ENCODE measurements at regions of chr11 and their contacts with region 1.

Region 1: DNA sequence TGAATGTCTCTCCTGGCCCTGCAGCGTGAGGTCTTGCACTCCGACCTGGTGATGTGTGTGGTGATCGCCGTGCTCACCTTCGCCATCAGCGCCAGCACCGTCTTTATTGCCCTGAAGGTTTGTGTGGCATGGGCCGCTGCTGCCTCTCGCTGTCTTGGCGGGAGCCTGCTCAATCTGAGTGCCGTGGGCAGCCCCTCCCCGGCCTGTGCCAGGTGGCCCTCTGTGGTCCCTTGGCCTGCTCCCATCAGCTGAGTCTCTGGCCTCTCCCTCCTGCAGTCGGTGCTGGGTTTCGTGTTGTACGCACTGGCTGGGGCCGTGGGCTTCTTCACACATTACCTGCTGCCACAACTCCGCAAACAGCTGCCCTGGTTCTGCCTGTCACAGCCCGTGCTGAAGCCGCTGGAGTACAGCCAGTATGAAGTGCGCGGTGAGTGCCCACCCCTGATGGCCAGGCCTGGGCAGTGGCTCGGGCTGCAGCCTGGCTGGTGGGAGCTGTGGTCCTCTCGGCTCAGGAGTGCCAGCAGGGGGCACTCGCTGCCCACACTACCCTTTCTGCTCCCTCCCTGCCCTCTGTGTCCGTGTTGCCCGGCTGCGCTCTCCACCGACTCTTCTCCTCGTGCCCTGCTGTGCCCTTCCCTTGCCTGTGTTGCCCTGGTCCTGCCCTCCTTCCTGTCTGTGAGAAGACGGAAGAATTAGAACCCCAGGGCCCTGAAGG is 10.2 kb downstream of the PCNX3 start:
- DNase-seq: peak in 2 of 3 donors; percentile 73 to 81
- H3K4me3 ChIP-seq: no peak overlapping the region
- H3K27ac ChIP-seq: no peak overlapping the region
- H3K4me1 ChIP-seq: peaks cover 0 to 5% (median 2%) of the 10 kb centered on the region in 4 experiments
- H3K27me3 ChIP-seq: no peaks in the 10 kb centered on the region

Region 2: GRCh38 chr11:65506770-65507505 is 118.8 kb before region 1 on chr11:
- CTCF ChIA-PET with region 1: no interaction called
- POLR2A ChIA-PET with region 1: no interaction called
- DNase-seq: peak; percentile 85 to 96 (median 96)
- H3K4me3 ChIP-seq: peak overlapping the region in 2 of 7 experiments; percentile 28 to 100
- H3K27ac ChIP-seq: peak overlapping the region in 1 of 2 experiments; percentile 100
- H3K4me1 ChIP-seq: peaks cover 18 to 46% (median 39%) of the 10 kb centered on the region in 4 experiments
- H3K27me3 ChIP-seq: no peaks in the 10 kb centered on the region

Region 3: DNA sequence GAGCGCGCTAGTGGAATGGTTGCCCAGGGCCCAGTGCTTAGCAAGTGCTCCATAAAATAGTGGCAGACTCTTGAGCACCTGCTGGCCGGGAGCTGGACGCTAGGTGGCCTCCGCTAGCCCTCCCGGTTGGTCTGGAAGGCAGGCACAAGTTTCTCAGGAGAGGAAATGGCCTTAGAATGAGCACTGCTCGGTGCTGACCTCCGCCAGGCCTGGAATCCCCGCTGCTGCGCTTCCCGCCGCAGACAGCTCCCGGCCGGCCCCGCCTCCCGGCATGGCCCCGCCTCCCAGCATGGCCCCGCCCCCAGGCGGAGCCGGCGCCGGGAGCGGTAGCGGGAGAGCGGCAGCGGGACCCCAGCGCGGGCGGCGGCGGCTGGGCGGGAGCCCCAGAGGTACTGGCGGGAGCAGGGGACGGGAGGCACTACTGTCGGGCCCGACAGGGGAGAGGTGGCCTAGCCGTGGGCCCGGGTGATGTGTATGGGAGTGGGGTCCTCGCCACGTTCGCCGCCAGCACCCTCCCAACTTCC is 12.1 kb after region 1 on chr11 and contains the start of gene SIPA1:
- CTCF ChIA-PET with region 1: interaction called, 56 read pairs
- POLR2A ChIA-PET with region 1: interaction called, 7 read pairs
- DNase-seq: peak in 2 of 3 donors; percentile 63 to 67
- H3K4me3 ChIP-seq: peak within 1 kb of the TSS; percentile 60 to 84 (median 79)
- H3K27ac ChIP-seq: peak within 1 kb of the TSS; percentile 33 to 84
- H3K4me1 ChIP-seq: peaks cover 5 to 82% (median 70%) of the 10 kb centered on the region in 4 experiments
- H3K27me3 ChIP-seq: no peaks in the 10 kb centered on the region

Region 4: GRCh38 chr11:65652511-65653231 is 26.9 kb after region 1 on chr11:
- CTCF ChIA-PET with region 1: interaction called, 39 read pairs
- POLR2A ChIA-PET with region 1: interaction called, 13 read pairs
- DNase-seq: peak; percentile 96 to 98 (median 97)
- H3K4me3 ChIP-seq: peak overlapping the region; percentile 20 to 78 (median 66)
- H3K27ac ChIP-seq: peak overlapping the region; percentile 93 to 94
- H3K4me1 ChIP-seq: peaks cover 13 to 42% (median 33%) of the 10 kb centered on the region in 4 experiments
- H3K27me3 ChIP-seq: no peaks in the 10 kb centered on the region

Region 5: DNA sequence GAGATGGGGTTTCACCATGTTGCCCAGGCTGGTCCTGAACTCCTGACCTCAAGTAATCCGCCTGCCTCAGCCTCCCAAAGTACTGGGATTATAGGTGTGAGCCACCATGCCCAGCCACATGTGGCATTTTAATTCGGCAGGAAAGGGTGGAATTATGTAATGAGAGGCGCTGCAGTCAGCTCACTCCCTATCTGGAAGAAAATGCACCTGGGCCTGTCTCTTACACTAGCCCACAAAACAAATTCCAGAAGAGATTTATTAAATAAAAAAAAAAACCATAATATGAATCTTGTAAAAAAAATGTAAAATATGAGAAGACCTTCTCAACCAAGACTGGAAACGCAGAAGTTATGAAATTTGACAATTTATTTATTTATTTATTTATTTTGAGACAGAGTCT is 78.1 kb after region 1 on chr11:
- CTCF ChIA-PET with region 1: interaction called, 36 read pairs
- POLR2A ChIA-PET with region 1: no interaction called
- DNase-seq: no peak
- H3K4me3 ChIP-seq: no peak overlapping the region
- H3K27ac ChIP-seq: no peak overlapping the region
- H3K4me1 ChIP-seq: peaks cover 0 to 3% (median 1%) of the 10 kb centered on the region in 4 experiments
- H3K27me3 ChIP-seq: no peaks in the 10 kb centered on the region

Region 6: DNA sequence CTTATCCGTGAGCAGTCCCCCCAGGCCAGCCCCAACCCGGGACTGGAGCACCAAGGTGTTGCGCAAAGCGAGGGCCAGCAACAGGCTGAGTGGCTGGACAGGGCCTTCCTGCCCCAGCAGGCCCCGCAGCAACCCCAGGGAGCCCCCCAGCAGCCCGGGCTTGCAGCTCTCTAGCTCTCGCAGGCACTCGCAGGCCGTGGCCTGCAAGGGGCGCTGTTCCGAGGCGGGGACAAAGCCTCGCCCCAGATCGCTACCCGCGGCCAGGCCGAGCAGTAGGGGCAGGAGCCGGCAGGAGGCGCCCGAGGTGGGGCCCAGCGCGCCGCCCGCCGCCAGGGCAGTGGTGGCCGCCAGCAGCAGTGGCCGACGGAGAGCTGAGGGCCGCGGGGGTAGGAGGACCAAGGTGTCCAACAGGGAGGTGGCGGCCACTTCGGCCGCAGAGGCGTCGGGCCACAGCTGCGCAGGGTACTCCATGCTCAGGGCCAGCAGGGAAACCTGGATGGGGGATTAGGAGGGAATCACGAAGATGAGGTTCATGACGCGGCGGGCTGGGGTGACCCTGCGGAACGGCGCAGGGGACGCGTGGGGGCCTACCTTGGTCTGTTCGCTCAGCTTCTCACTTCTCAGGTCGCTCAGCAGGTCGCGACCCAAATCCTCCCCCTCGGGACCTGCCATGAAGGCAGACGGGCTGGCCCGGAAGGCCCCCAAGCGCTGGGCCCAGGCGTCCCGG is 154.2 kb after region 1 on chr11:
- CTCF ChIA-PET with region 1: interaction called, 11 read pairs
- POLR2A ChIA-PET with region 1: no interaction called
- DNase-seq: peak; percentile 81 to 92 (median 91)
- H3K4me3 ChIP-seq: peak overlapping the region; percentile 56 to 85 (median 72)
- H3K27ac ChIP-seq: peak overlapping the region in 1 of 2 experiments; percentile 77
- H3K4me1 ChIP-seq: peaks cover 0 to 37% (median 19%) of the 10 kb centered on the region in 4 experiments
- H3K27me3 ChIP-seq: peaks cover 0 to 33% (median 6%) of the 10 kb centered on the region in 5 experiments

Measured in common myeloid progenitor, CD34-positive (primary cell).